ENCODE measurements at regions of chr4 and their contacts with region 1.

Region 1: GRCh38 chr4:12933760-12934221 is 550.3 kb downstream of the RAB28 start:
- DNase-seq: peak; percentile 96
- ATAC-seq: peak; percentile 96
- H3K4me3 ChIP-seq: peak overlapping the region in 2 of 3 experiments; percentile 35 to 42; a peak in 2 of 6 replicates
- H3K27ac ChIP-seq: peak overlapping the region; percentile 95
- H3K4me1 ChIP-seq: peaks cover 62% of the 10 kb centered on the region
- H3K27me3 ChIP-seq: no peaks in the 10 kb centered on the region
- CTCF ChIP-seq: no peak
- EP300 ChIP-seq: peak; percentile 59 to 93; a peak in 3 of 4 replicates
- POLR2A ChIP-seq: no peak
- RAD21 ChIP-seq: no peak

Region 2: DNA sequence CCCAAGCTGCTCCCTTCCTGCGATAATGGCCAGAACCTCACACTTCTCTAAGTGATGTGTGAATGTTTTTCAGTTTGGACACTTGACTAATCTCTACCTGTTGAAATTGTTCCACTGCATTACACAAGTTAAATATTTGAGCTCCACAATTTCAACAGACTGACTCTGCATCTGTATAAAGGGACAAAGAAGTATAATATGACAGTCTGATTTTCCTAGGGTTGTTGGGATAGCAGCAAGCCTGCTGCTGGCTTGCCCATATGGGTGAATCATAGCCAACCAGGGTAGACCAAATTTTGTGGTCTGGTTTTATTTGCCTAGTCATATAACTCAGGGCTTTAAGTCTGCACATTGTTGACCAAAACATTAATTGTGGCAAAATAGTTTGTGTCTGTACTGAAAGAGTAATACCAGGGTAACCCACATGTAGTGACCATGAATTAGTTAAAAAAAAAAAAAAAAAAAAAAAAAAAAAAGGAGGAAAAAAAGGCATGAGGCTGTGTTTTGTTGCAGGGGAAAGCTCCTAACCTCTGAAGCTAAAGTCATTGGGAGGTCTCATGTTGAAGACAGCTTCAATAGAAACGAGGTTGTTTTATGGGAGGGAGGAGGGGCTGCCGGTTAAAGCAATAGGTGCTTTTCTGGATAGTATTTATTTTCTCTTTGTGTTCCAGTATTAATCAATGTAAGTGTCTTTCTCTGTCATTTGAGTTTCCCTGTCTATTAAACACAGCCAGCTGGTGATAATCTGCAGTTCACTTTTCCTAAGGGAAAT is 16.1 kb after region 1 on chr4:
- CTCF ChIA-PET with region 1: no interaction called
- POLR2A ChIA-PET with region 1: interaction called, 13 read pairs
- in situ Hi-C with region 1: no loop called
- intact Hi-C with region 1: loop called (anchors 2 kb)
- DNase-seq: peak; percentile 84
- ATAC-seq: peak; percentile 98
- H3K4me3 ChIP-seq: no peak overlapping the region
- H3K27ac ChIP-seq: peak overlapping the region; percentile 7
- H3K4me1 ChIP-seq: peaks cover 39% of the 10 kb centered on the region
- H3K27me3 ChIP-seq: no peaks in the 10 kb centered on the region; a peak in 1 of 5 replicates
- CTCF ChIP-seq: no peak
- EP300 ChIP-seq: peak; percentile 41 to 88; a peak in 2 of 4 replicates
- POLR2A ChIP-seq: no peak
- RAD21 ChIP-seq: no peak

Region 3: GRCh38 chr4:13445841-13446790 is 512.3 kb after region 1 on chr4:
- CTCF ChIA-PET with region 1: no interaction called
- POLR2A ChIA-PET with region 1: no interaction called
- in situ Hi-C with region 1: no loop called
- intact Hi-C with region 1: no loop called
- DNase-seq: no peak
- ATAC-seq: no peak
- H3K4me3 ChIP-seq: no peak overlapping the region
- H3K27ac ChIP-seq: no peak overlapping the region
- H3K4me1 ChIP-seq: no peaks in the 10 kb centered on the region
- H3K27me3 ChIP-seq: no peaks in the 10 kb centered on the region
- CTCF ChIP-seq: no peak
- EP300 ChIP-seq: no peak
- POLR2A ChIP-seq: no peak
- RAD21 ChIP-seq: no peak

Region 4: GRCh38 chr4:13484122-13484748 is 550.4 kb after region 1 on chr4 and contains the start of gene RAB28:
- CTCF ChIA-PET with region 1: no interaction called
- POLR2A ChIA-PET with region 1: no interaction called
- in situ Hi-C with region 1: no loop called
- intact Hi-C with region 1: loop called (anchors 10 kb)
- DNase-seq: peak; percentile 83
- ATAC-seq: peak; percentile 96
- H3K4me3 ChIP-seq: peak within 1 kb of the TSS; percentile 78 to 94 (median 85)
- H3K27ac ChIP-seq: peak within 1 kb of the TSS; percentile 75
- H3K4me1 ChIP-seq: peaks cover 22% of the 10 kb centered on the region
- H3K27me3 ChIP-seq: no peaks in the 10 kb centered on the region; a peak in 1 of 5 replicates
- CTCF ChIP-seq: no peak
- EP300 ChIP-seq: no peak
- POLR2A ChIP-seq: peak; percentile 46 to 66; a peak in 3 of 4 replicates
- RAD21 ChIP-seq: no peak
- total RNA-seq, gene RAB28: 18.2 and 20.9 TPM in 2 replicates